ENCODE measurements at regions of chr14 and their contacts with region 1.

Region 1: GRCh38 chr14:22929104-22929847 is at the start of gene PRMT5:
- DNase-seq: peak; percentile 98 to 99
- ATAC-seq: peak; percentile 95 to 97
- H3K4me3 ChIP-seq: peak within 1 kb of the TSS; percentile 73
- H3K27ac ChIP-seq: peak within 1 kb of the TSS; percentile 82 to 90
- H3K4me1 ChIP-seq: peaks cover 22% of the 10 kb centered on the region
- CTCF ChIP-seq: no peak
- EP300 ChIP-seq: no peak
- POLR2A ChIP-seq: peak; percentile 97
- RAD21 ChIP-seq: no peak
- polyA plus RNA-seq, gene PRMT5: 214 and 299 TPM in 2 replicates

Region 2: GRCh38 chr14:22900081-22900799 is 29.0 kb before region 1 on chr14:
- CTCF ChIA-PET with region 1: interaction called, 10 read pairs
- POLR2A ChIA-PET with region 1: no interaction called
- DNase-seq: peak; percentile 77 to 81
- ATAC-seq: peak; percentile 81 to 83
- H3K4me3 ChIP-seq: no peak overlapping the region
- H3K27ac ChIP-seq: no peak overlapping the region; a peak in 1 of 6 replicates
- H3K4me1 ChIP-seq: peaks cover 17% of the 10 kb centered on the region
- CTCF ChIP-seq: peak; percentile 72
- EP300 ChIP-seq: no peak
- POLR2A ChIP-seq: no peak
- RAD21 ChIP-seq: peak; percentile 62 to 70

Region 3: DNA sequence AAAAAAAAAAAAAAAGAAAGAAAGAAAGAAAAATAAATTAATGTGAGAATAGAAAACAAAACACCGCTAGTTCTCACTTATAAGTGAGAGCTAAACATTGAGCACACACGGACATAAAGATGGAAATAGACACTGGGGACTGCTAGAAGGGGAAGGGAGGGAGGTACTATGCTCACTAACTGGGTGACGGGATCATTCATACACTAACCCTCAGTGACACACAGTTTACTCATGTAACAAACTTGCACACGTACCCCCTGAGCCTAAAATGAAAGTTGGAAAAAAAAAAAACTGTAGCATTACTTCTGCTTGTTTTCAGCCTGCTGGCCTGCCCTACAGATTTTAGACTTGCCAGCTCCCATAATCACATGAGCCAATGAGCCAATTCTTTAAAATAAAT is 10.4 kb after region 1 on chr14:
- CTCF ChIA-PET with region 1: interaction called, 83 read pairs
- POLR2A ChIA-PET with region 1: no interaction called
- DNase-seq: no peak
- ATAC-seq: no peak
- H3K4me3 ChIP-seq: no peak overlapping the region
- H3K27ac ChIP-seq: no peak overlapping the region
- H3K4me1 ChIP-seq: no peaks in the 10 kb centered on the region
- CTCF ChIP-seq: no peak
- EP300 ChIP-seq: no peak
- POLR2A ChIP-seq: no peak
- RAD21 ChIP-seq: no peak

Region 4: GRCh38 chr14:22966783-22967269 is 37.5 kb after region 1 on chr14:
- CTCF ChIA-PET with region 1: interaction called, 47 read pairs
- POLR2A ChIA-PET with region 1: interaction called, 4 read pairs
- DNase-seq: no peak
- ATAC-seq: peak; percentile 46 to 52; a peak in 5 of 6 replicates
- H3K4me3 ChIP-seq: no peak overlapping the region
- H3K27ac ChIP-seq: no peak overlapping the region; a peak in 1 of 6 replicates
- H3K4me1 ChIP-seq: peaks cover 11% of the 10 kb centered on the region
- CTCF ChIP-seq: no peak
- EP300 ChIP-seq: no peak
- POLR2A ChIP-seq: no peak
- RAD21 ChIP-seq: no peak

Region 5: GRCh38 chr14:22994762-22995275 is 65.5 kb after region 1 on chr14:
- CTCF ChIA-PET with region 1: interaction called, 10 read pairs
- POLR2A ChIA-PET with region 1: interaction called, 3 read pairs
- DNase-seq: peak; percentile 40 to 41
- ATAC-seq: peak; percentile 91 to 94
- H3K4me3 ChIP-seq: no peak overlapping the region
- H3K27ac ChIP-seq: peak overlapping the region in 1 of 2 experiments; percentile 56; a peak in 2 of 6 replicates
- H3K4me1 ChIP-seq: peaks cover 5% of the 10 kb centered on the region; the same call in 2 of the 3 replicates
- CTCF ChIP-seq: peak; percentile 60
- EP300 ChIP-seq: no peak
- POLR2A ChIP-seq: no peak
- RAD21 ChIP-seq: peak; percentile 60 to 75; a peak in 4 of 5 replicates

Measured in A549 (cell line).